Dendritic cell treated with granulocyte-macrophage colony-stimulating factor and Interleukin-4, amounts not matched to agents 40 ng/mL and 50 ng/mL, for 4 days (primary cell): ENCODE measurements at regions of chr3 and their contacts with region 1.

Region 1: DNA sequence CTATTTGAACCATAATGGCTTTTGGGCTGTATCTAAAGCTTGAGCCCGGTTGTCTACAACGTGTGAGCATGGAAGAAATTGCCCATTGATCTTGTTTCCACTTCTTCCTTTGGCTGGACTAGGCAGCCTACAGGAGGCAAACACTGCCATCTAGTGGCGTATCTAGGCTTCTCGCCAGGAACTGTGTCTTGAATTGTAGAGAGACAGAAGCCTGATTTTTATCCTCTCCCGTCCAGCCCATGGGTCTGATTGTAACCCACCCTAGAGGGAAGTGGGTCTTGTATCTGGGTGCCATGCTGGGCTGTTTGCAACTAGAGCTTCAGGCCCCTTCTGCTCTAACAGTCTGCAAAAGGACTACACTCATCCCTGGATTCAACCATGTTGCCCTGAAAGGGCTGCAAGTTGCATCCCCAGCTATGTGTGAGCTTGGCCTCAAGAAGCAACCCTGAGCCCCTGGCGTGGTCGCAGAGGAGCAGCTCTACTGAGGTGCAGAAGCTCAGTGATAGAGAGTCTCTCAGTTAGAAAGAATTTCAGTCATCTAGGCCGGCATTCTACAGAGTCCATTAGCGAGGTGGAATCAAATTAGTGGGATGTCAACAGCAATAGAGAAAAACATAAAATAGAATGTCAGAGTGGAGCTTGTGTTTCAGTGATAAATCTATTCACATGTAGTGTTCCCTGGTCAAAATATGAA is 170.2 kb upstream of the UMPS start:
- H3K4me3 Mint-ChIP-seq: no peak overlapping the region
- H3K27ac Mint-ChIP-seq: no peak overlapping the region
- H3K4me1 Mint-ChIP-seq: peaks cover 6% of the 10 kb centered on the region
- H3K27me3 Mint-ChIP-seq: peaks cover 23% of the 10 kb centered on the region

Region 2: GRCh38 chr3:123533554-123534159 is 1026.4 kb before region 1 on chr3:
- intact Hi-C with region 1: no loop called
- H3K4me3 Mint-ChIP-seq: no peak overlapping the region
- H3K27ac Mint-ChIP-seq: no peak overlapping the region
- H3K4me1 Mint-ChIP-seq: no peaks in the 10 kb centered on the region
- H3K27me3 Mint-ChIP-seq: no peaks in the 10 kb centered on the region

Region 3: GRCh38 chr3:124351430-124352148 is 208.4 kb before region 1 on chr3:
- intact Hi-C with region 1: loop called (anchors 10 kb)
- H3K4me3 Mint-ChIP-seq: no peak overlapping the region
- H3K27ac Mint-ChIP-seq: no peak overlapping the region
- H3K4me1 Mint-ChIP-seq: no peaks in the 10 kb centered on the region
- H3K27me3 Mint-ChIP-seq: peaks cover 5% of the 10 kb centered on the region

Region 4: DNA sequence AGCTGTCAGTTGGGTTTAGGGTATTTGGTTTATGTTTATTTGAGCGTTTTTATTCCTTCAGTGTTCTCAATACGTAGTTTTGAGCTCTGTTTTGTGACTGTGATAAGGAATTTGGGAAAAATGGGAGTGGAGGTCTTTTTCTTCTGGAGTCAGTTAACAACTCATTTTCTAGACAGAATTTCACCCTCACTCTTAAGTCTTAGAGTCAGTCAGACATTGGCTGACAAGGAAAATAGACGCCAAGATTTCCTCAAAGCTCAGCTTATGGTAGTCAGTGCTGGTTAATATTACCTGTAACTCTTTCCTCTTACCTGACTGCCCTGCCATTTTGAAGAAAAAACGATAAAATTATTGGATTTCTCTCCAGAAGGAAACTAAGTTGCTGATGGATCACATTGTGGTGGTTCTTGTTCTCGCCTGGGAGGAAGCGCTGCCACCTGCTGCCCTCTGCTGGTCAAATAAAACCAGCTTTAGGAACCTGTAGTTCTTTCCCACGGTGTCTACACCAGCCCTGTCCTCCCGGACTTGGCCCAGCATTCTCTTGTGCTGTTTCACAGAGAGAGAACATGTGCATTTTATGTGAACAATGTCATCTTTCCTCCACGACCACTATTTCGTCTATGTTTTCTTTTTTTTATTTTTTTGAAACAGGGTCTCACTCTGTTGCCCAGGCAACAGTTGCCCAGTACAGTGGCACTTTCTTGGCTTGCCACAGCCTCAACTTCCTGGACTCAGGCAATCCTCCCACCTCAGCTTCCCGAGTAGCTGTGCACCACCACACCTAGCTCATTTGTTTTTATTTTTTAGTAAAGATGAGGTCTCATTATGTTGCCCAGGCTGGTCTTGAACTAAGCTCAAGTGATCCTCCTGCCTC is 128.8 kb after region 1 on chr3:
- intact Hi-C with region 1: loop called (anchors 1 kb)
- H3K4me3 Mint-ChIP-seq: no peak overlapping the region
- H3K27ac Mint-ChIP-seq: no peak overlapping the region
- H3K4me1 Mint-ChIP-seq: no peaks in the 10 kb centered on the region
- H3K27me3 Mint-ChIP-seq: peaks cover 13% of the 10 kb centered on the region

Region 5: GRCh38 chr3:125322166-125322565 is 762.1 kb after region 1 on chr3:
- intact Hi-C with region 1: no loop called
- H3K4me3 Mint-ChIP-seq: no peak overlapping the region
- H3K27ac Mint-ChIP-seq: no peak overlapping the region
- H3K4me1 Mint-ChIP-seq: peaks cover 3% of the 10 kb centered on the region
- H3K27me3 Mint-ChIP-seq: no peaks in the 10 kb centered on the region